ENCODE measurements at regions of chr2 and their contacts with region 1.

Region 1: GRCh38 chr2:53740170-53740569 is 27.4 kb upstream of the CHAC2 start:
- DNase-seq: no peak
- H3K4me3 ChIP-seq: no peak overlapping the region
- H3K27ac ChIP-seq: no peak overlapping the region
- H3K4me1 ChIP-seq: peaks cover 5 to 19% of the 10 kb centered on the region in 2 donors
- H3K27me3 ChIP-seq: no peaks in the 10 kb centered on the region
- CTCF ChIP-seq: peak in 2 of 3 experiments; percentile 34 to 53

Region 2: GRCh38 chr2:51995293-51995692 is 1744.9 kb before region 1 on chr2:
- intact Hi-C with region 1: loop called (anchors 10 kb)
- DNase-seq: no peak
- H3K4me3 ChIP-seq: no peak overlapping the region
- H3K27ac ChIP-seq: no peak overlapping the region
- H3K4me1 ChIP-seq: peaks cover 0 to 4% of the 10 kb centered on the region in 2 donors
- H3K27me3 ChIP-seq: no peaks in the 10 kb centered on the region
- CTCF ChIP-seq: no peak

Region 3: DNA sequence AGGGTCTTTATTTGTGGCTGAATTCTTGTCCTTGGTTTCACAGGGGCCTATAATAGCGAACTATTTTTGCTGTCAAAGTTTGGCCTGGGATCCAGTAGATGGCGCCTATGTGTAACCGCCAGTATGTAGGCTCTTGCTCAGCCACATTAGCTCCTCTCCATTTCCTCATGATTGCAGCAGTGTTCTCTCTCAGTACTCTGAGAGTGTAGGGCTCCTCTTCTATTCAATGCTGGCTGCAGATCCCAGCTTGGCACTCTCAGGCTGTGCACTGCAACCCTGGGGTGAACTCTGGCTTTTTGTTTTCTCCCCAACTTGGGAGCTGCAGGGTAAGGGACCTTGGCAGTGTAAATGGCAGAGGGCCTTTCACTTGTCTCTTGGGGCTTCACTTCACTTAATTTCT is 317.2 kb before region 1 on chr2:
- intact Hi-C with region 1: loop called (anchors 10 kb)
- DNase-seq: no peak
- H3K4me3 ChIP-seq: no peak overlapping the region
- H3K27ac ChIP-seq: no peak overlapping the region
- H3K4me1 ChIP-seq: no peaks in the 10 kb centered on the region
- H3K27me3 ChIP-seq: no peaks in the 10 kb centered on the region
- CTCF ChIP-seq: peak; percentile 12 to 43 (median 16)

Region 4: DNA sequence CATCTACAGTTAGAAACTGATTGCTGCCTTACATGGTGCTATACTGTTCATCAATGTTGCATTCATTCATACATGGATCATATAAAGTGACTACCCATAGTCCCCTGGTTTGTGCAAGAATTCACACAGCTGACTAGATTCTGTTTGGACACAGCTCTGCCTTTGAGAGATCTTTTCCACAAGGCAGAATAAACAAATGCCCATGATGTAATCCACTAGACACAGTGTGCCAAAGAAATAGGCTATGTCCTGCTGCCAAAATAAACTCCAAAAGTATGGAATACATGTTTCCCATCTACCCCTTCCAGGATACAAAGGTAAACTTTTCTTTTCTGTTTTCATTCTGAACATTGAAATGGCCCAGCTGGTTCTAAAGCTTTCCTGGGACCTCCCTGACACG is 242.0 kb before region 1 on chr2:
- intact Hi-C with region 1: loop called (anchors 5 kb)
- DNase-seq: no peak
- H3K4me3 ChIP-seq: no peak overlapping the region
- H3K27ac ChIP-seq: peak overlapping the region; percentile 63 to 82
- H3K4me1 ChIP-seq: peaks cover 0 to 33% of the 10 kb centered on the region in 2 donors
- H3K27me3 ChIP-seq: no peaks in the 10 kb centered on the region
- CTCF ChIP-seq: no peak

Region 5: DNA sequence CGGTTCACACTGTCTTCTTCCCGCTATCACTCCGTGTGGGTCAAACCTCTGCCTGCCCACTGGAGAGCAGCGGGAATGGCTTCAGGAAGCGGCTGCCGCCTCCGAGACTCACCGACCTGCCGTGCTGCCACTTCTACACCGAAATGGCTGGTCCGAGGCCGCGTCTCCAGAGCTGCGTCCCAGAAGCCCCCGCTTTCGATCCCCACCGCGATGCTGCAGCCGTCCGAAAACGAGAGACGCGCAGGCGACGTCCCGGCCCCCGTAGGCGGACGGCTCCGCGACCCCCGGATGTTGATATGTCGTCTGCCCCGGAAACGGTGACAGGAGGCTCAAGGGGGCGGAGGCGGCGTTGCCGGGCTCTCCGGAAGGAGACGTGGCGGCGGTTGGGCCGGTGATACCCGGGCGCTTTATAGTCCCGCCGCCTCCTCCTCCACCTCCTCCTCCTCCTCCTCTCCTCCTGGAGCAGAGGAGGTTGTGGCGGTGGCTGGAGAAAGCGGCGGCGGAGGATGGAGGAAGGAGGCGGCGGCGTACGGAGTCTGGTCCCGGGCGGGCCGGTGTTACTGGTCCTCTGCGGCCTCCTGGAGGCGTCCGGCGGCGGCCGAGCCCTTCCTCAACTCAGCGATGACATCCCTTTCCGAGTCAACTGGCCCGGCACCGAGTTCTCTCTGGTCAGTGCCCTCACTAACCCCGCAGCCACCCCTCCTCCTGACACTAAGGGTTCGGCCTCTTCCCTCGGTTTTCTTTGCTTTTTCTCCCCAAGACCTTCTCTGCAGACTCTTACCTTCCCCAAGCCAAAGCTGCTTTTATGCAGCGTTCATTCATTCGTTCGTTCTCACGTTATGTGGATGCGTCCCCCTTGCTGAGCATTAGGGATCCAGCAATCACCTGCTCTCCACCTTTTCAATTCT is 46.8 kb after region 1 on chr2 and contains the starts of genes ASB3 and ERLEC1:
- intact Hi-C with region 1: loop called (anchors 2 kb)
- DNase-seq: peak; percentile 49 to 92
- H3K4me3 ChIP-seq: peak within 1 kb of the TSS; percentile 69 to 83
- H3K27ac ChIP-seq: peak within 1 kb of the TSS; percentile 79 to 87
- H3K4me1 ChIP-seq: peaks cover 0 to 15% of the 10 kb centered on the region in 2 donors
- H3K27me3 ChIP-seq: no peaks in the 10 kb centered on the region
- CTCF ChIP-seq: peak in 1 of 3 experiments; percentile 36
- total RNA-seq, gene ASB3: 3.4 TPM
- total RNA-seq, gene ERLEC1: 150 TPM

Region 6: GRCh38 chr2:54240515-54241469 is 500.6 kb after region 1 on chr2:
- intact Hi-C with region 1: loop called (anchors 5 kb)
- DNase-seq: peak in 1 of 2 donors; percentile 79
- H3K4me3 ChIP-seq: no peak overlapping the region
- H3K27ac ChIP-seq: peak overlapping the region; percentile 74 to 78
- H3K4me1 ChIP-seq: peaks cover 8 to 26% of the 10 kb centered on the region in 2 donors
- H3K27me3 ChIP-seq: no peaks in the 10 kb centered on the region
- CTCF ChIP-seq: no peak

Measured in ascending aorta (tissue), 2 donors.